Ascending aorta (tissue), 2 donors: ENCODE measurements at regions of chrX and their contacts with region 1.

Region 1: DNA sequence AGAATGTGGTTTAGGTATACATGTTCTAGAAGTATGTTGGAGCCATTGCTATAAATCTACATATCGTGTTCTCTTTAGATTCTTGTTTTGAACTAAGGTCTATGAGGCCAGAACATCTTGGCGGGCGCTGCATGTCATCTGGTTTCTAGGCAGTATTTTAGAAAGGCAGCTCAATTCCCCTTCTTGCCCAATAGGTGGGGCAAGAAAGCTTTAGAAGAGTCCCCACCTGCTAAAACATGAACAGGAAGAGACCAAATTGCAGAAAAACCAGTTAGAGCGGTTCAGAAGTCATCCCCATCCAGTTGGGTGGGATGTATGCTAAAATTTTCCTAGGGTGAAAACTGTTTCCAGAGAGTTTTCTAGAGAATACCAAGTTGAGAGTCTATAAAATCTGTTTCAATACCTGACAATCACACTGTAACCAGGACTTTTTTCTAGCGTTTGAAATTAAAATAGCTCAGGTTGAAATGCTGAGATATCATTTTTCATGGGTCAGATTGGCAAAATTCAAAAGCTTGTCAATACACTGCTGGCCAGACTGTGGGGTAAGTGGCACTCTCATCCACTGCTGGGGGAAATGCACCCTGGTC is 17.5 kb upstream of the SH3KBP1 start:
- DNase-seq: no peak
- H3K4me3 ChIP-seq: no peak overlapping the region
- H3K27ac ChIP-seq: no peak overlapping the region
- H3K4me1 ChIP-seq: no peaks in the 10 kb centered on the region
- H3K27me3 ChIP-seq: no peaks in the 10 kb centered on the region
- CTCF ChIP-seq: peak; percentile 21 to 65 (median 46)

Region 2: GRCh38 chrX:19875050-19875431 is 29.8 kb before region 1 on chrX:
- intact Hi-C with region 1: no loop called
- DNase-seq: no peak
- H3K4me3 ChIP-seq: no peak overlapping the region
- H3K27ac ChIP-seq: no peak overlapping the region
- H3K4me1 ChIP-seq: no peaks in the 10 kb centered on the region
- H3K27me3 ChIP-seq: no peaks in the 10 kb centered on the region
- CTCF ChIP-seq: no peak

Region 3: GRCh38 chrX:19990556-19991349 is 85.9 kb after region 1 on chrX and contains the start of gene BCLAF3:
- intact Hi-C with region 1: loop called (anchors 2 kb)
- DNase-seq: peak; percentile 53 to 92
- H3K4me3 ChIP-seq: peak within 1 kb of the TSS; percentile 61 to 69
- H3K27ac ChIP-seq: peak within 1 kb of the TSS; percentile 46 to 68
- H3K4me1 ChIP-seq: no peaks in the 10 kb centered on the region
- H3K27me3 ChIP-seq: no peaks in the 10 kb centered on the region
- CTCF ChIP-seq: peak; percentile 84 to 86 (median 84)
- total RNA-seq, gene BCLAF3: 5.0 TPM

Region 4: DNA sequence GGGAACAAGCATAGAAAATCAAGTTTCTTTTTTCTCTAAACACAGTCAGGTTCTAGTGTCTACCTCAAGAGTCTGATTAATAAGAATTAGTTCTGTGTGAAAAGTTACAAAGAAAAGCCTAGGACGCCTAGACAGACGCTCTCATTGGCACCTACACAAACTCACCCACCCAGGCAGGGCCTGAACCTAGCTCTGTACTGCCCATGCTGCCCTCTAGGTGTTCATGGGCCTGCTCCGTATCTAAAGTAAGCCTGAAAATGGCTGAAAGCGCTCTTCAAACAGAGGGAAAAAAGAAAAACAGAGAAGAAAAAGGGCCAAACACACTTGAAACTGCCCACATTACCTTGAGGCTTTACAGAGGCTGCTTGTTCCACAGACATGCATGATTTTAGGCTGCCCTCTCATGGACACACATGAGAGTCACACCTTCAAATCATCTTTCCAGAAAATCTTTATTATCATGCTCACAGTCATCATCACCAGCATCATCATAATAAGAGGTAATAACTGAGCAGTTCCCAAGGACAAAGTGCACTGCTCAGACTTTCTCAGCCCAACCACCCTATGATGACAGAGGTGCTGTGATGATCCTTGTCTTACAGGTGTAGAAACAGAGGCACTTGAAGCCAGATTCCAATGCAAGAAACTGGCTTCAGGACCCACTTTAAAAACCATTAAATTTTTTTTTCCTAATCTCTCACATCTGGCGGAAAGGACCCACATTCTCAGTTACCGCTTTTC is 162.3 kb after region 1 on chrX:
- intact Hi-C with region 1: loop called (anchors 10 kb)
- DNase-seq: no peak
- H3K4me3 ChIP-seq: no peak overlapping the region
- H3K27ac ChIP-seq: peak overlapping the region in 1 of 2 donors; percentile 32
- H3K4me1 ChIP-seq: peaks cover 3 to 4% of the 10 kb centered on the region in 2 donors
- H3K27me3 ChIP-seq: no peaks in the 10 kb centered on the region
- CTCF ChIP-seq: peak in 2 of 3 experiments; percentile 14 to 40

Region 5: DNA sequence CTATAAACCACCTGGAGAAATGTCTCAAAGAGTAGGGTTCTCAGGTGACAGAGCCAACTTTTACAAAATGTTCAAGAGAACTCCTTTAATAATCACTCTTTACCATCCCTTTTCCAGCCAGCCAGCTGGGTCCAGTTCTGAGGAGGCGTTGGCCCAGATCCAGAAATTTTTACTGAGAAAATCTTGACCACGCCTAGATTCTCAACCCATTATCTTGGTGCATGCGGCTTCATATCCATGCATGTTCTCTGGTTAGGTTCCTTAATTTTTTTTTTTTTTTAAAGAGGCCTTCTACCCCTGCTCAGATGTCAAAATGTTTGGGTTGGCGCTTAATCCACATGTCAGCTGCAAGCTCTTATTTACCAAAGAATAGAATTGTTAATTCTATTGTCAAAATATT is 223.8 kb after region 1 on chrX:
- intact Hi-C with region 1: loop called (anchors 10 kb)
- DNase-seq: no peak
- H3K4me3 ChIP-seq: no peak overlapping the region
- H3K27ac ChIP-seq: no peak overlapping the region
- H3K4me1 ChIP-seq: no peaks in the 10 kb centered on the region
- H3K27me3 ChIP-seq: no peaks in the 10 kb centered on the region
- CTCF ChIP-seq: no peak